PC-9 (cell line): ENCODE measurements at regions of chr10 and their contacts with region 1.

Region 1: GRCh38 chr10:43843321-43844101 is 194.8 kb upstream of the ZNF32 start:
- DNase-seq: no peak
- H3K4me3 ChIP-seq: no peak overlapping the region
- H3K27ac ChIP-seq: no peak overlapping the region
- H3K4me1 ChIP-seq: no peaks in the 10 kb centered on the region
- H3K27me3 ChIP-seq: peaks cover 6% of the 10 kb centered on the region; the same call in 1 of the 2 replicates
- CTCF ChIP-seq: no peak

Region 2: DNA sequence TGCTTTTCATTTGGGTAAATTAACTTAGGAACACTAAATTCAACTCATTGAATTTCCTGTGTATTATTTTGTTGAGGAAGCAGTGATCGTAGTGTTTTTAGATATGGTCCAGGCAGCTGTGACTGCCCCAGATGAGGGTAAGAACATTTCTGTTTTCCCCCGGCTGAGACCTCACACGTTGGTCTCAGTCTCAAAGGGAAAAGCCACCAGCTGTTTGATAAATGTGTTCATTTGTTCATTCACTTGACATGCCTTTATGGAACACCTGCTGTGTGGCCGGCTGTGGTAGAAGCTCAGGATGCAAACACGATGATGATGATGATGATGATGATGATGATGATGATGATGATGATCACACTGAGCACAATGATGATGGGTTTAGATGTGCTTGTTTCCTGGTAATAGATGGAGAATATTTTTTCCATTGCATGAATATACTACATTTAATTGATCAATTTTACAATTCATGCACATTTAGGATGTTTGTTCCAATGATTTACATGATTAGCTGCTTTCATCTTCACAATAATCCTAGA is 69.2 kb before region 1 on chr10:
- CTCF ChIA-PET with region 1: no interaction called
- POLR2A ChIA-PET with region 1: no interaction called
- intact Hi-C with region 1: no loop called
- DNase-seq: no peak
- H3K4me3 ChIP-seq: no peak overlapping the region
- H3K27ac ChIP-seq: no peak overlapping the region
- H3K4me1 ChIP-seq: no peaks in the 10 kb centered on the region
- H3K27me3 ChIP-seq: peaks cover 7% of the 10 kb centered on the region
- CTCF ChIP-seq: no peak

Region 3: GRCh38 chr10:43854007-43854406 is 10.5 kb after region 1 on chr10:
- CTCF ChIA-PET with region 1: no interaction called
- POLR2A ChIA-PET with region 1: no interaction called
- intact Hi-C with region 1: loop called (anchors 1 kb)
- DNase-seq: peak; percentile 82 to 84
- H3K4me3 ChIP-seq: no peak overlapping the region
- H3K27ac ChIP-seq: no peak overlapping the region
- H3K4me1 ChIP-seq: peaks cover 10% of the 10 kb centered on the region; the same call in 1 of the 2 replicates
- H3K27me3 ChIP-seq: peaks cover 9% of the 10 kb centered on the region; the same call in 1 of the 2 replicates
- CTCF ChIP-seq: no peak

Region 4: DNA sequence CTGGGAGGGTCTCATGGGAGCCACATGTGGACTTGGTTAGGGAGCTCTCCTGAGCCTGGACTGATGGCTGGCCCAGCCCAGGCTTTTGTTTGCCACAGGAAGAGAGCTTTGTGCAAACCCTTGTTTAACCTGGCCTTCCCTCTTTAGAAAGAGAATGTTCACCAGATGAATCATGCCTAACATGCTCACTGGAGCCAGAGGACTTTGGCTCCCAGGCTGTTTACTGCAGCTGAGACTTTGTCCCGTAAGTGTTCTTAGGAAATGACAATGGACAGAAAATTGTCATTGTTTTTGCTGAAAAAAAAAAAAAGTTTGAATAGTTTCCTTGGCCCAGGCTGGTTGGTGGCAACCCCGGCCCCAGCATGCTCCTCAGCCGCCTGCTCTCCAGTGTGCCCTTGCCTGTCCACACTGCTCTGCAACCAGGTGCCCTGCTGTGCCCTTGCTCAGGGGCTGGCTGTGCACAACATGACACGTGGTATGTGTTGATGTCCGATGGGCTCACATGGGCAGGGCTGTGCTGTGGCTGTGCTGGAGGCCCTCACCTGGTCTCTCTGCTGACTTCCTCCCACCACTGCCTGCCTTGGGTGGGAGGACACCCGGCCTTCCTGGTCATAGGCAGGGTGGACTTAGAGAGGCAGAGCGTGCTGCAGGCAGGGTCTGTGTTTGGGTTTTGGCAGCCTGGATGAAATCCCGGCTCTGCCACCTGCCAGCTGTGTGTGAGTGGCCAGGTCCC is 20.5 kb after region 1 on chr10:
- CTCF ChIA-PET with region 1: no interaction called
- POLR2A ChIA-PET with region 1: no interaction called
- intact Hi-C with region 1: loop called (anchors 2 kb)
- DNase-seq: peak; percentile 61 to 77
- H3K4me3 ChIP-seq: no peak overlapping the region
- H3K27ac ChIP-seq: no peak overlapping the region
- H3K4me1 ChIP-seq: no peaks in the 10 kb centered on the region
- H3K27me3 ChIP-seq: peaks cover 14% of the 10 kb centered on the region
- CTCF ChIP-seq: no peak

Region 5: GRCh38 chr10:44044549-44044948 is 201.0 kb after region 1 on chr10:
- CTCF ChIA-PET with region 1: no interaction called
- POLR2A ChIA-PET with region 1: no interaction called
- intact Hi-C with region 1: no loop called
- DNase-seq: no peak
- H3K4me3 ChIP-seq: no peak overlapping the region
- H3K27ac ChIP-seq: no peak overlapping the region
- H3K4me1 ChIP-seq: no peaks in the 10 kb centered on the region
- H3K27me3 ChIP-seq: peaks cover 58% of the 10 kb centered on the region
- CTCF ChIP-seq: no peak